ENCODE measurements at regions of chr6 and their contacts with region 1.

Region 1: GRCh38 chr6:111057074-111057752 is 30.1 kb upstream of the SLC16A10 start:
- DNase-seq: peak in 1 of 2 donors; percentile 18
- ATAC-seq: peak in 7 of 8 donors; percentile 11 to 78 (median 59)
- H3K4me3 ChIP-seq: no peak overlapping the region
- H3K27ac ChIP-seq: no peak overlapping the region
- H3K4me1 ChIP-seq: peaks cover 0 to 2% (median 0%) of the 10 kb centered on the region in 9 donors
- H3K27me3 ChIP-seq: no peaks in the 10 kb centered on the region
- CTCF ChIP-seq: peak; percentile 42 to 72 (median 64)

Region 2: DNA sequence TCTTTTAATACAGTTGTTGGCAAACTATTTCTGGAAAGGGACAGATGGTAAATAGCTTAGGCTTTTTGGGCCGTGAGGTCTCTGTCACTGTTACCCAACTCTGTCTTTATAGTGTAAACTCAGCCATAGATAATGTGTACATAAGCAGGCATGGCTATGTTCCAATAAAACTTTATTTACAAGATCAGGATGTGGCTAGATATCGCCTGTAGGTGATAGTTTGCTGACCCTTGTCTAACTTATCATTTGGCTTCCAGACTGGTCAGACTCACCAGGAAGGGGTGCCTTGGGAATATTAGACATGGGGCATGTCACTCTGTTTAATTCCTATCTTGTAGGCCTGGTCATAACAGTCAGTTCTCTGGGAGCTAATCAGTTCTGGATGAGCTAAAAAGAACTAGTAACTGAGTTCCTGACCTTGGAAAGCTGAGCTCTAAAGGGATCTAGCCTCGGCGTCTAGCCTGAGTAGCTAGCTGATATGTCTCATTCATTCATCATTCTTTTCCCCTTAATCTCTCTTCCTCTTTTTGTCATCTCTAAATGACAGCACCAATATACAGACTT is 193.7 kb after region 1 on chr6:
- intact Hi-C with region 1: loop called in 1 of 10 experiments (anchors 5 kb)
- DNase-seq: no peak
- ATAC-seq: peak in 2 of 8 donors; percentile 25 to 28
- H3K4me3 ChIP-seq: no peak overlapping the region
- H3K27ac ChIP-seq: no peak overlapping the region
- H3K4me1 ChIP-seq: no peaks in the 10 kb centered on the region
- H3K27me3 ChIP-seq: peaks cover 0 to 12% (median 2%) of the 10 kb centered on the region in 7 donors
- CTCF ChIP-seq: no peak